Body of pancreas (tissue), 4 donors: ENCODE measurements at regions of chr19 and their contacts with region 1.

Region 1: GRCh38 chr19:23470873-23471545 is 75.7 kb upstream of the ZNF91 start:
- DNase-seq: no peak
- ATAC-seq: no peak
- H3K4me3 ChIP-seq: no peak overlapping the region
- H3K27ac ChIP-seq: no peak overlapping the region
- H3K4me1 ChIP-seq: no peaks in the 10 kb centered on the region
- H3K27me3 ChIP-seq: no peaks in the 10 kb centered on the region
- CTCF ChIP-seq: no peak
- POLR2A ChIP-seq: no peak

Region 2: DNA sequence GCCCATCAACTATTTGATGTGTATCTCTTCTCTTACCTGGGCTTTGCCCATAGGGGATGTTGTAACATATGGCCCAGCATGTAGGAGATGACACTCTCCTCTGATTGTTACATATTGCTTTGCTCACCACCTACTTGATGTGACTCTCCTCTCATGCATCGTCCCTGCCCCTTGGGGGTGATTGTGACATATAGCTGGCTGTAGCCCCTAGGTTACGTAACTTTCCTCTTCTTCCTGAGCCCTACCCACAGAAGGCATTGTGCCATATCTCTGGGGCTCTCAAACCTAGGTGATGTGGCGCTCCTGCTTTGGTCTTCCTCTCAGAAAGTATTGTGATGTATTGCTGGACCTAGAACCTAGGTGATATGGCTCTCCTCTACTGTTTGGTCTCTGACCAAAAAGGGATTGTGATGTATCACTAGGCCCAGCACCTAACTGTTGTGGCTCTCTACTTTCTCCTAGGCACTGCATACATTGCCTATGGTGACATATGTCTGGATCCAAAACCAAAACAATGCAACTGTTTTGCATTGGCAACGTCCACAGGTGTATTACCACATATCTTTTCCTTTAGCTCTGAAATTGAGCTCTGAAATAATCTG is 149.0 kb before region 1 on chr19:
- intact Hi-C with region 1: loop called (anchors 2 kb)
- DNase-seq: no peak
- ATAC-seq: no peak
- H3K4me3 ChIP-seq: no peak overlapping the region
- H3K27ac ChIP-seq: no peak overlapping the region
- H3K4me1 ChIP-seq: no peaks in the 10 kb centered on the region
- H3K27me3 ChIP-seq: no peaks in the 10 kb centered on the region
- CTCF ChIP-seq: no peak
- POLR2A ChIP-seq: no peak

Region 3: DNA sequence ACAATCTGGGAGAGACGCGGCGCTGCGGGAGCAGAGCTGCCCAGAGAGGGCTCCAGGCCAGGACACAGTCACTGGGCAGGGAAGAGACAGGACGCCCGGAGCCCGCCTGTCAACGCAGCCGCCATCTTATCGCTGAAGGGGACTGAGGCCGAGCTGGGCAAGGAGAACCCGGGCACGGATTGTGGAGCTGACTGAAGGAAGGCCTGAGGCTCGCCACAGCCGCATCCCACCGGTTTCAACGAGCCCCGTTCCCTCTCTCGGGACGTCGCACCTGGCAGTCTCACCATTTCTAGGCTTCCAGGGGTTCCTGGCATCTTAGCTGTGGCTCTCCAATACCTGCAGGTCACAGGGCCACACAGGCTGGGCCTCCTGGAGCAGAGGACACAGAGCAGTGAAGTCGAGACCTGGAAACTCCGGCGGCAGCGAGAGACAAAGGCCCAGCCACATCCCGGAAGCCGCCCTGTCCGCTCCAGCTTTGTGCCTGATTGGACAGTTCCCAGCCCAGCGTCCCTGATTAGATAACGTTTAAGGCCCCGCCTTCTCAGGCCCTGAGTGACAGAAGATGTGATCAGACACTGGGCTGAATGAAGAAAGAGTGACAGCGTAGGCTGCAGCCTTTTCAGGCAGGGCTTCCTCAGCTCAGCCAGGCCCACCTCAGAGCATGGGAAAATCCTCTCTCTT is 75.8 kb before region 1 on chr19 and contains the start of gene ZNF91:
- intact Hi-C with region 1: no loop called
- DNase-seq: peak; percentile 94 to 97 (median 96)
- ATAC-seq: peak; percentile 97
- H3K4me3 ChIP-seq: peak within 1 kb of the TSS; percentile 70 to 85
- H3K27ac ChIP-seq: peak within 1 kb of the TSS; percentile 77 to 98 (median 96)
- H3K4me1 ChIP-seq: peaks cover 46% of the 10 kb centered on the region
- H3K27me3 ChIP-seq: no peaks in the 10 kb centered on the region
- CTCF ChIP-seq: no peak
- POLR2A ChIP-seq: peak; percentile 81 to 97 (median 95)
- total RNA-seq, gene ZNF91: 43.3 to 51.1 TPM